ENCODE measurements at regions of chr1 and their contacts with region 1.

Region 1: GRCh38 chr1:196723322-196724185 is 51.1 kb upstream of the CFHR3 start:
- DNase-seq: peak in 3 of 9 experiments; percentile 17 to 30 (median 20)
- ATAC-seq: peak; percentile 57
- H3K4me3 ChIP-seq: no peak overlapping the region
- H3K4me3 Mint-ChIP-seq: no peak overlapping the region
- H3K27ac ChIP-seq: no peak overlapping the region
- H3K27ac Mint-ChIP-seq: no peak overlapping the region
- H3K4me1 ChIP-seq: no peaks in the 10 kb centered on the region
- H3K4me1 Mint-ChIP-seq: no peaks in the 10 kb centered on the region
- H3K27me3 ChIP-seq: no peaks in the 10 kb centered on the region
- H3K27me3 Mint-ChIP-seq: no peaks in the 10 kb centered on the region
- CTCF ChIP-seq: peak; percentile 34

Region 2: GRCh38 chr1:197356723-197357533 is 633.4 kb after region 1 on chr1:
- CTCF ChIA-PET with region 1: no interaction called
- POLR2A ChIA-PET with region 1: no interaction called
- intact Hi-C with region 1: loop called in 1 of 2 experiments (anchors 10 kb)
- DNase-seq: peak in 2 of 9 experiments; percentile 49 to 58
- ATAC-seq: peak; percentile 51
- H3K4me3 ChIP-seq: no peak overlapping the region
- H3K4me3 Mint-ChIP-seq: no peak overlapping the region
- H3K27ac ChIP-seq: no peak overlapping the region
- H3K27ac Mint-ChIP-seq: no peak overlapping the region
- H3K4me1 ChIP-seq: no peaks in the 10 kb centered on the region
- H3K4me1 Mint-ChIP-seq: peaks cover 2% of the 10 kb centered on the region
- H3K27me3 ChIP-seq: no peaks in the 10 kb centered on the region
- H3K27me3 Mint-ChIP-seq: no peaks in the 10 kb centered on the region
- CTCF ChIP-seq: no peak